ENCODE measurements at regions of chr14 and their contacts with region 1.

Region 1: GRCh38 chr14:59964251-59965007 is 44.5 kb downstream of the LRRC9 start:
- DNase-seq: no peak
- ATAC-seq: peak; percentile 49
- H3K4me3 ChIP-seq: no peak overlapping the region
- H3K27ac ChIP-seq: no peak overlapping the region
- H3K4me1 ChIP-seq: peaks cover 0 to 4% of the 10 kb centered on the region in 2 experiments; a peak in 1 of 4 replicates
- H3K27me3 ChIP-seq: no peaks in the 10 kb centered on the region
- CTCF ChIP-seq: no peak
- POLR2A ChIP-seq: no peak
- RAD21 ChIP-seq: no peak

Region 2: DNA sequence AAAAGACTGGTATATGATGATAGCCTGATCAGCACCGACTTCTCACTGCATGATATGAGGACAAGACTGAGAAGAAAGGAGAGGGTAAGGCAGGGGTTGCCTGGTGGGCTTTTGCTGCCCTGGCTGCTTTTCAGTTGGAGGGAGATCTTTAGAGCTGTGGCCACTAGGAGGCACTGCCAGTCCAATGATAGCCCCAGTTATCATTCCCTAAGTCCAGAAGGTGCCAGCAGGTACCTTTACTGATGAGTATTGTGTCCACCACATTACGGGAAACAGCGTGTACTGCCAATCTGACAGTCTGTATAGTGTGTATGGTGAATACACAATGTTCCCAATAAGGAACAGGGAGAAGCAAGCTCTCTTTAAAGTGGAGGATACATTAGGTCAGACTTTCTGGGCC is 332.0 kb before region 1 on chr14:
- CTCF ChIA-PET with region 1: interaction called, 11 read pairs
- POLR2A ChIA-PET with region 1: no interaction called
- RAD21 ChIA-PET with region 1: no interaction called
- intact Hi-C with region 1: no loop called
- DNase-seq: peak; percentile 33
- ATAC-seq: peak; percentile 80
- H3K4me3 ChIP-seq: no peak overlapping the region
- H3K27ac ChIP-seq: no peak overlapping the region
- H3K4me1 ChIP-seq: no peaks in the 10 kb centered on the region
- H3K27me3 ChIP-seq: no peaks in the 10 kb centered on the region
- CTCF ChIP-seq: peak; percentile 69 to 75 (median 71)
- POLR2A ChIP-seq: no peak
- RAD21 ChIP-seq: peak; percentile 70

Region 3: GRCh38 chr14:60164712-60165546 is 200.5 kb after region 1 on chr14 and contains the start of gene DHRS7:
- CTCF ChIA-PET with region 1: interaction called, 3 read pairs
- POLR2A ChIA-PET with region 1: no interaction called
- RAD21 ChIA-PET with region 1: no interaction called
- intact Hi-C with region 1: loop called (anchors 5 kb)
- DNase-seq: peak; percentile 51
- ATAC-seq: peak; percentile 98
- H3K4me3 ChIP-seq: peak within 1 kb of the TSS; percentile 79 to 98
- H3K27ac ChIP-seq: peak within 1 kb of the TSS; percentile 91
- H3K4me1 ChIP-seq: peaks cover 16 to 27% of the 10 kb centered on the region in 2 experiments
- H3K27me3 ChIP-seq: no peaks in the 10 kb centered on the region
- CTCF ChIP-seq: peak; percentile 43 to 46 (median 45); a peak in 3 of 6 replicates
- POLR2A ChIP-seq: peak; percentile 42
- RAD21 ChIP-seq: peak; percentile 71
- total RNA-seq, gene DHRS7: 43.8 TPM